GM12878 (cell line): ENCODE measurements at regions of chr15 and their contacts with region 1.

Region 1: DNA sequence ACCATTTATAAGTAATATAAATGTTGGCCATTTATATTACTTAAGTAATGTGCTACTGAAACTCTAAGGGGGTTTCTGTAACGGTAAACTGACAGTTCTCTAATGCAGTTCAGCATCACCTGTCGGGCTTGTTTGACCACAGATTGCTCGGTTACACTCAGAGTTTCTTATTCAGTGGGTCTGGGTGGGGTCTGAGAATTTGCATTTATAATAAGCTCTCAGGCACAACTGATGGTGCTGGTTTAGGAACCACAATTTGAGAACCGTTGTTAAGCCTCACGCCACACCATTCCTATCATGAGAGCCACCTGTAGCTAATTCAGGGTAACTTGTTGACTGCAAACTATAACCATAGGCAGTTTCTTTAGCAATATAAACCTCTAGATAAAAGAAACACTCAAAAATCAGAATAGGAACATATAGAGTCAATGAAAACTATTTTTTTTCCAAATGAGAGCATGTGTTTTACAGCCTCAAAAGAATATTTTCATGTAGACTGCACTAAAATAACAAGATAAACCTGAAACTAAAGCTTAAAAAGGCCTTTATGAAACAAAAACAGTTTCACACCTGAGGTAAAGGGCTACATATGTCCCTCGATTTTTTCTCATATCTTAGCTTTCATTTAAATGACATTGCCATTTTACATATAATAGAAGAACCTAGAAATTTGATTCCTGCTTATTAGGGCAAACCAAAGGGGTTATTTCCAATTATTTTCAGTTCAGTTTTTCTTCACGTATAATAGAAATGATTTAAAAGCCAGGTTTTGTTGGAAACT is 604.8 kb downstream of the UNC13C start:
- DNase-seq: peak; percentile 74
- ATAC-seq: peak; percentile 74; the same call in 2 of the 3 replicates
- H3K4me3 ChIP-seq: no peak overlapping the region
- H3K27ac ChIP-seq: no peak overlapping the region; the same call in 1 of the 2 replicates
- H3K4me1 ChIP-seq: 0 out of 2 replicates have a peak, but pooled peaks cover 3% of the 10 kb centered on the region
- H3K27me3 ChIP-seq: no peaks in the 10 kb centered on the region
- CTCF ChIP-seq: no peak
- EP300 ChIP-seq: peak; percentile 78 to 94
- POLR2A ChIP-seq: no peak
- RAD21 ChIP-seq: no peak

Region 2: DNA sequence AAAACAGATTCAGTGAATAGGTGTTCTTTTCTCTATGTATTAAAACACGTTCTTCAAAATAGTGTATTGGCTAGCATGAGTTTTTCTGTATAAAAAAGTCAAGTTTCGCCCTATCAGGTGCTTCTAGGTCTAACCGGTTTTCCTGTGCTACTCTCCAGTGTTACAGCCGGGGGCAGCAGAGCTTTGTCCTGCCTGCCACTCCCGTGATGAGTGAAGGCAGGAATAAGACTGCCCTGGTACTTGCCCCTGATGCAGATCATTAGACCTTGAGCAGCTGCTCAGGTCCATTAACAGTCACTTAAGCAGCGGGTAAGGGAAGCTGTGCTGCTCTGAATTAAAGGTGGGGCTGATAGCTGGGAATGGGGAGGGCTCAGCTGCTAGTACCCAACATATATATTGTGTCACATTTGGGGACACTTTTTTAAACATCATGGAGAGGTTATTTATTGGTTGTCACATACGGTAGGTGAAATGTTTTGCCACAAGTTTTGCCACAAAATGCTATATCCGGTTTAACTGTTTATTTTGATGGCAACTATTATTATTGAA is 606.1 kb before region 1 on chr15:
- CTCF ChIA-PET with region 1: interaction called, 4 read pairs
- POLR2A ChIA-PET with region 1: interaction called, 9 read pairs
- RAD21 ChIA-PET with region 1: interaction called, 21 read pairs
- SMC1A ChIA-PET with region 1: interaction called, 17 read pairs
- in situ Hi-C with region 1: no loop called
- intact Hi-C with region 1: loop called (anchors 5 kb)
- DNase-seq: no peak
- ATAC-seq: peak; percentile 72
- H3K4me3 ChIP-seq: no peak overlapping the region
- H3K27ac ChIP-seq: no peak overlapping the region
- H3K4me1 ChIP-seq: no peaks in the 10 kb centered on the region
- H3K27me3 ChIP-seq: no peaks in the 10 kb centered on the region
- CTCF ChIP-seq: peak in 2 of 3 experiments; percentile 34 to 62; a peak in 2 of 6 replicates
- EP300 ChIP-seq: no peak
- POLR2A ChIP-seq: no peak
- RAD21 ChIP-seq: peak; percentile 24; the same call in 1 of the 2 replicates

Region 3: DNA sequence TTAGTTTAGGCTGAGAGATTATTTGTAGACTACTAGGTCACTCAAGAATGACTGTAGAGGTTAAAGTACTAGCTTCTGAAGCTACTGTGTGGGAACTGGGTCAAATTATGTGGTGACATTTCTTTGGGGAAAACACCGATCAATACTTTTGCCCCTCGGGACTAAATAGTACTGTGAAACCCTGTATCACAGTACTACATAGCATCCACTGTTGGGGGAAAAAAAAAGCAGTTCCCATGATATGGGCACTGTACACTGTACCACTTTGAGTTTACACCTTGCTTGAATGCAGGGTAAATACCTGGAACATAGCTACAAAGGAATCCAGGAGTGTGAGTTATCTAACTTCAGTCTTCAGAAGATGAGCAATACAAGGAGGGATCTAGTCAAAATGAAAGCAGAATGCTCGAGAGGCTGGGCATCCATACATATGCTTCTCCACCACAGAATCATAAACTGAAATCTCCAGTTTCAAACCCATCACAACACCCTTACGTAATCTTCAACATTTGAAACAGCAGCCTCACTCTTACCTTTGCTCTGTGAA is 293.4 kb before region 1 on chr15:
- CTCF ChIA-PET with region 1: interaction called, 3 read pairs
- POLR2A ChIA-PET with region 1: no interaction called
- RAD21 ChIA-PET with region 1: interaction called, 13 read pairs
- SMC1A ChIA-PET with region 1: interaction called, 39 read pairs
- in situ Hi-C with region 1: no loop called
- intact Hi-C with region 1: loop called (anchors 2 kb)
- DNase-seq: peak; percentile 77
- ATAC-seq: peak; percentile 85
- H3K4me3 ChIP-seq: no peak overlapping the region
- H3K27ac ChIP-seq: no peak overlapping the region
- H3K4me1 ChIP-seq: no peaks in the 10 kb centered on the region
- H3K27me3 ChIP-seq: no peaks in the 10 kb centered on the region
- CTCF ChIP-seq: no peak
- EP300 ChIP-seq: peak; percentile 75 to 91; a peak in 3 of 4 replicates
- POLR2A ChIP-seq: no peak
- RAD21 ChIP-seq: no peak

Region 4: DNA sequence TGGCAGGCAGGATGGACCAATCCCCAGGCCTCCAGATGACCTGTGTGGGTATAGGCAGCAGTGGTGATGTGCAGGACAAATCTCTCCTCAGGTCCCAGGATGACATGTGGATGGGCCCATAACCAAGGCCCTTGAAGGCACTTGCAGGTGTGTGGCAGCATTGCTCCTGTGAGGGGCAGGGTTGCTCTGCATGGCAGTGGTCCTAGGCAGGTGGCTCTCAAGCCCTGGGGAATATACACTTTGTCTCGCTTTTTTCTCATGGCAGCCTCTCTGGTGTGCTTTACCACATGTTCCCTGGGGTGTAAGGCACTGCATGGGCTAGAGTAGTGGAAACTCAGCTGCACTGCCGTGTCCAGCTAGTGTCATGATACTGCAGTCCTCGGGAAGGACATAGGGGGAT is 101.2 kb before region 1 on chr15:
- CTCF ChIA-PET with region 1: interaction called, 5 read pairs
- POLR2A ChIA-PET with region 1: interaction called, 3 read pairs
- RAD21 ChIA-PET with region 1: interaction called, 14 read pairs
- SMC1A ChIA-PET with region 1: interaction called, 17 read pairs
- in situ Hi-C with region 1: no loop called
- intact Hi-C with region 1: no loop called
- DNase-seq: no peak
- ATAC-seq: peak; percentile 80
- H3K4me3 ChIP-seq: no peak overlapping the region
- H3K27ac ChIP-seq: no peak overlapping the region
- H3K4me1 ChIP-seq: no peaks in the 10 kb centered on the region
- H3K27me3 ChIP-seq: no peaks in the 10 kb centered on the region
- CTCF ChIP-seq: peak in 2 of 3 experiments; percentile 13 to 33; a peak in 2 of 6 replicates
- EP300 ChIP-seq: no peak
- POLR2A ChIP-seq: no peak
- RAD21 ChIP-seq: peak; percentile 35

Region 5: GRCh38 chr15:54550954-54551353 is 32.1 kb before region 1 on chr15:
- CTCF ChIA-PET with region 1: interaction called, 3 read pairs
- POLR2A ChIA-PET with region 1: no interaction called
- RAD21 ChIA-PET with region 1: no interaction called
- SMC1A ChIA-PET with region 1: interaction called, 14 read pairs
- in situ Hi-C with region 1: no loop called
- intact Hi-C with region 1: no loop called
- DNase-seq: no peak
- ATAC-seq: peak; percentile 53
- H3K4me3 ChIP-seq: no peak overlapping the region
- H3K27ac ChIP-seq: no peak overlapping the region
- H3K4me1 ChIP-seq: no peaks in the 10 kb centered on the region
- H3K27me3 ChIP-seq: no peaks in the 10 kb centered on the region
- CTCF ChIP-seq: no peak
- EP300 ChIP-seq: no peak
- POLR2A ChIP-seq: no peak
- RAD21 ChIP-seq: no peak

Region 6: GRCh38 chr15:54594115-54594514 is 11.1 kb after region 1 on chr15:
- CTCF ChIA-PET with region 1: interaction called, 3 read pairs
- POLR2A ChIA-PET with region 1: no interaction called
- RAD21 ChIA-PET with region 1: interaction called, 11 read pairs
- SMC1A ChIA-PET with region 1: interaction called, 5 read pairs
- in situ Hi-C with region 1: no loop called
- intact Hi-C with region 1: no loop called
- DNase-seq: no peak
- ATAC-seq: peak; percentile 22
- H3K4me3 ChIP-seq: no peak overlapping the region
- H3K27ac ChIP-seq: no peak overlapping the region
- H3K4me1 ChIP-seq: no peaks in the 10 kb centered on the region
- H3K27me3 ChIP-seq: no peaks in the 10 kb centered on the region
- CTCF ChIP-seq: no peak
- EP300 ChIP-seq: no peak
- POLR2A ChIP-seq: no peak
- RAD21 ChIP-seq: no peak

Region 7: DNA sequence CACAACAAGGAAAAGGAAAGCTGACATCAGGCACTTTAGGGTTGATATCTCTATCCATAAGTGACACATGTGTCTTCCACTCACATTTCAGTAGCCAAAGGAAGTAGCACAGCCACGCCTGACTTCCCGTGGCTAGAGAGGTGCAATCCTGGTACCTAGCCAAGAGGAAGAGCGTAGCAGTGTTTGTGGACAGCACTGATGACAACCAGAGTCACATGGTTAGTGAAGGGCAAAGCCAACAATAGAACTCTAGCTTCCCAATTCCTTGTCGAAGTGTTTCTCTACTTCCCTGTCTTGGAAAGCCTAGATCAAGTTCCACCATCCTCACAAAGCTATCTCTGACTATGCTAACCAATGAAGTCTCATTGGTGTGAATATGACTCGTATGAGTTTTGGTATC is 424.5 kb after region 1 on chr15:
- CTCF ChIA-PET with region 1: no interaction called
- POLR2A ChIA-PET with region 1: no interaction called
- RAD21 ChIA-PET with region 1: no interaction called
- SMC1A ChIA-PET with region 1: no interaction called
- in situ Hi-C with region 1: no loop called
- intact Hi-C with region 1: no loop called
- DNase-seq: no peak
- ATAC-seq: no peak
- H3K4me3 ChIP-seq: no peak overlapping the region
- H3K27ac ChIP-seq: no peak overlapping the region
- H3K4me1 ChIP-seq: no peaks in the 10 kb centered on the region
- H3K27me3 ChIP-seq: no peaks in the 10 kb centered on the region
- CTCF ChIP-seq: no peak
- EP300 ChIP-seq: no peak
- POLR2A ChIP-seq: no peak
- RAD21 ChIP-seq: no peak

Region 8: DNA sequence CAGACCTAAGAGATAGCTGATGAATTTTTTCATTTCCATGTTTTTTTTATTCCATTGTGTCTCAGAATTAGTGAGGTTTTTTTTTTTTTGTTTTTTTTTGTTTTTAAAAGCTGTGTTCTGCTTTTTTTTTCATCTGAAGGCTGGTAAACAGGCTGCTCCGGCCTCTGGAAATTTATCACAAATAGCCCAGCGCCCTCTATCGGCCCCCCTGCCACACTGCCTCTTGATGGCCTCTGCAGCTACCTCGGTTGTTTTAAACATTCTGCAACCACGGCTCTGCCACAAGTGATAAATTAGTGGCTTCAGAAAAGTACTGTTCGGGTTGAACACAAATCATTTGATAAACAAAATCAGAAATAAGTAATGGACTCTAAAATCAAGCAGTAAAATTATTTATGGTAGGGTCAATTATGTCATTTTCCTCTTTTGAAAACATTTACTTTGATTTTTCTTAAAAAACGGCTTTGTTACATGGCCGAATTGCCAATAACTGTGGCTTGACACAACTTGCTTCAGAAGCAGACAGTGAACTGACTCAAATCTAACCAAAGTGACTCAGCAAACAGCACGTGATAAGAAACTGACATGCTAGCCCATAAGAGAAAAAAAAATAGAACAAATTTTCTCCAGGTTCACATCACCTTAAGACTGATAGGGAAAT is 525.9 kb after region 1 on chr15:
- CTCF ChIA-PET with region 1: no interaction called
- POLR2A ChIA-PET with region 1: no interaction called
- RAD21 ChIA-PET with region 1: interaction called, 4 read pairs
- SMC1A ChIA-PET with region 1: interaction called, 7 read pairs
- in situ Hi-C with region 1: no loop called
- intact Hi-C with region 1: loop called (anchors 5 kb)
- DNase-seq: peak; percentile 9
- ATAC-seq: peak; percentile 91
- H3K4me3 ChIP-seq: no peak overlapping the region
- H3K27ac ChIP-seq: no peak overlapping the region
- H3K4me1 ChIP-seq: no peaks in the 10 kb centered on the region
- H3K27me3 ChIP-seq: no peaks in the 10 kb centered on the region
- CTCF ChIP-seq: peak; percentile 74 to 83 (median 77)
- EP300 ChIP-seq: 0 out of 4 replicates have a peak, but pooled peaks of 1 of the 2 experiments have one; percentile 26
- POLR2A ChIP-seq: no peak
- RAD21 ChIP-seq: peak; percentile 70